Posterior vena cava (tissue), 2 donors: ENCODE measurements at regions of chr6 and their contacts with region 1.

Region 1: GRCh38 chr6:87684895-87685654 is 17.0 kb downstream of the AKIRIN2 start:
- DNase-seq: no peak

Region 2: GRCh38 chr6:88208726-88209125 is 523.7 kb after region 1 on chr6:
- intact Hi-C with region 1: loop called in 1 of 2 experiments (anchors 5 kb)
- DNase-seq: no peak